ENCODE measurements at regions of chr15 and their contacts with region 1.

Region 1: GRCh38 chr15:74123138-74123443 is 7.3 kb upstream of the ISLR2 start:
- DNase-seq: no peak
- H3K4me3 ChIP-seq: no peak overlapping the region
- H3K27ac ChIP-seq: no peak overlapping the region
- H3K4me1 ChIP-seq: peaks cover 3 to 21% of the 10 kb centered on the region in 2 donors
- H3K27me3 ChIP-seq: peaks cover 3% of the 10 kb centered on the region
- CTCF ChIP-seq: no peak
- POLR2A ChIP-seq: no peak

Region 2: GRCh38 chr15:74055804-74056203 is 67.3 kb before region 1 on chr15:
- intact Hi-C with region 1: loop called (anchors 5 kb)
- DNase-seq: no peak
- H3K4me3 ChIP-seq: no peak overlapping the region
- H3K27ac ChIP-seq: no peak overlapping the region
- H3K4me1 ChIP-seq: peaks cover 19 to 28% of the 10 kb centered on the region in 2 donors
- H3K27me3 ChIP-seq: no peaks in the 10 kb centered on the region
- CTCF ChIP-seq: no peak
- POLR2A ChIP-seq: no peak